Ascending aorta (tissue), 2 donors: ENCODE measurements at regions of chr16 and their contacts with region 1.

Region 1: GRCh38 chr16:85172455-85173145 is 60.3 kb upstream of the CIBAR2 start:
- DNase-seq: no peak
- H3K4me3 ChIP-seq: peak overlapping the region; percentile 13 to 48
- H3K27ac ChIP-seq: peak overlapping the region in 1 of 2 donors; percentile 1
- H3K4me1 ChIP-seq: peaks cover 9 to 42% of the 10 kb centered on the region in 2 donors
- H3K27me3 ChIP-seq: no peaks in the 10 kb centered on the region
- CTCF ChIP-seq: peak; percentile 24 to 40 (median 31)

Region 2: GRCh38 chr16:85206472-85207356 is 34.1 kb after region 1 on chr16:
- intact Hi-C with region 1: loop called (anchors 5 kb)
- DNase-seq: peak in 1 of 2 donors; percentile 82
- H3K4me3 ChIP-seq: peak overlapping the region; percentile 33 to 38
- H3K27ac ChIP-seq: peak overlapping the region; percentile 63 to 77
- H3K4me1 ChIP-seq: peaks cover 35 to 70% of the 10 kb centered on the region in 2 donors
- H3K27me3 ChIP-seq: no peaks in the 10 kb centered on the region
- CTCF ChIP-seq: no peak

Region 3: DNA sequence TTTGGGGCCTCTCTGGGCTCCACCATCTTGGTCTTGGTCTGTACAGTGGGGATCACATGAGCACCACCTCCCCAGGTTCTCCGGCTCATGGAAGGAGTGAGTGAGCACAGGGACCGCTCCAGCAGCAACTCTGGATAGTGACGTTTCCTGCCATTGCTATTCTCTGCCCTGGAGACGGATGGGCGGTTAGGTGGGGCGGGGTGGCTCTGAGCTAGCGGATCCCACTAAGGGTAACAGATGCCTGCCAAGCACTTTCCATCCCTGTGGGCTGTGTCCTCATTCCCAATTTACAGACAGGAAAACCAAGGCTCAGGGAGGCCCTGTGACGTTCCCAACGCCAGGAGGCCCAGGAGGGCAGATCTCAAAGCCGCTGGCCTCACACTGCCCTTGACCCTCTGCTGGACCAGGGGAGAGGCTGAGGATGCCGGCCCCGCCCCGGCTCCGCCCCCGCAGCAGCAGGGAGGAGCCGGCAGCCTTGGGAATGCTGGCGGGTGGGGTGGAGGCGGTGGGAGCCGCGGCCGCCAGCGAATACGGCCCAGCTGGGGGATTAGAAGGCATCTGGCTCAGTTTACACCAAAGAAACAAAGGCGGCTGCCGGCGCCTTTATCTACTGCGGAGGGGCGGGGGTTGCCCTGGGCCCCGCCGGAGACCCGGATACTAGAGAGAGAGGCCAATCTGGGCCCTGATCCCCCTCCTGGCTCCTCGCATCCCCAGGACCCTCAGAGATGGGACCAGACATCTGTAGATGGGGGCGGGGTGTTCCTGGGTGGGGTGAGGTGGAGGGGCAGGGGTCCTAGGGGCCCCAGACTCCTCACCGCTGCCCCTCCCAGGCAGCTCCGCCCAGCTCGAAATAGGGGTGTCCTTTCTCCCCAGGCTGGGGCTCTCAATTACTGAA is 62.0 kb after region 1 on chr16:
- intact Hi-C with region 1: loop called (anchors 5 kb)
- DNase-seq: peak in 1 of 2 donors; percentile 79
- H3K4me3 ChIP-seq: peak overlapping the region; percentile 48 to 58
- H3K27ac ChIP-seq: peak overlapping the region; percentile 70 to 74
- H3K4me1 ChIP-seq: peaks cover 20 to 45% of the 10 kb centered on the region in 2 donors
- H3K27me3 ChIP-seq: no peaks in the 10 kb centered on the region
- CTCF ChIP-seq: no peak

Region 4: DNA sequence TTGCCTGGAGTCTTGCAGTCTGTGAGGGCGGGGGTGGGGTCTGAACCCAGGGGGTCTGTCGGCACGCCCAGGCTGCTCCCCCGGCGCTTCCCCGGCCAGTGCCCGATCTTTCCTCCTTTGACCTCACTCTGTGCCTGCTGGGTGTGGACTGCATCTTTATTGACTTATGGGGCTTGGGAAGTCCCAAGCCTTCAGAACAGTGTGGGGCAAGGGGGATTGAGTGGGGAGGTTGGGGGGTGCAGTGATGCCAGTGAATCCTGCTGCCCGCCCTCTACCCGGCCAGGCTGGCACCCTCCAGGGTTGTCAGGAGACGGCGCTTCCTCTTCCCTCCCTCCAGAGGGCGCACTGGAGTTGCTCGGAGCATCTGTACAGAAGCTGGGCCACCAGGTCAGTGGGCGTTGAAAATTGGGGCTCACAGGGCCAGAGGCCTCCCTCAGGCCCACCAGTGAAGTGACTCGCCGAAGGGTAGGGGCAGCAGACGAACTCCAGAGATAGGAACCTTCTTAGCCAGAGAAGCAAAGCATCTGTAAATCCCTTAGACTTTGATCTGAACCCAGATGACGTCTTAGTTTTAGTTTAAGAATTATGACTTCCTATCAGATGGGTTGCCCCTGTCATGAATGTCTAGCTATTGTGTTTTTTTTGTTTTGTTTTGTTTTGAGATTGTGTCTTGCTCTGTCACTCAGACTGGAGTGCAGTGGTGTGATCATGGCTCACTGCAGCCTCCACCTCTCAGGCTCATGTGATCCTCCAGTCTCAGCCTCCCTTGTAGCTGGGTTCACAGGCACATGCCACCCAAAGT is 124.5 kb after region 1 on chr16:
- intact Hi-C with region 1: no loop called
- DNase-seq: no peak
- H3K4me3 ChIP-seq: no peak overlapping the region
- H3K27ac ChIP-seq: no peak overlapping the region
- H3K4me1 ChIP-seq: no peaks in the 10 kb centered on the region
- H3K27me3 ChIP-seq: no peaks in the 10 kb centered on the region
- CTCF ChIP-seq: peak; percentile 48 to 55 (median 55)

Region 5: DNA sequence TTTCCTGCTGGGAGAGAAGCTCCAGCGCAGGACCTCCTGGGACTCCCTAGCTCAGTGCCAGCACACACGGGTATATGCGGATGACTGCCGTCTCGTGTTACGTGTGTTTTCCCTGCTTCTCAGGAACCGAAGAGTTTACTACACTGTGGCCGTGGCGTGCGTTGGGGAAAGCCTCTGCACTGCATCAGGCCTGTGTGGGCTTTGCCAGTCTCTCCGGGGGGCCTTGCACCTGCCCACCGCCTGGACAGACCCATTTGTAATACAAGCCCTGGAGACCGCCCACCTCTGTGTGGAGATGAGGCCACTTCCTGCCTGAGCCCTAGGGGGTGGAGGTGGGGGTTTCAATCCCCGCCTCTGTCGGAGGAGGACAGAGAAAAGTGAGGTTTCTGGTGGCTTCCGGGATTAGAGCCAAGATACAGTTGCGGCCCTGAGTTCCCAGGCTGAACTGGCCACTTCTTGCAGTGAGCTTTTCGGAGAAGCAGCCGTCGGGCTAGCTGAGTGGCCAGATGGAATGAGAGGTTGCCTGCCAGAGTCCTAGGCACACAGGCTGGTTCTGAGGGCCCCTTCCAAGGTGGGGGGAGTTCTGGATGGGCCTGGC is 397.1 kb after region 1 on chr16:
- intact Hi-C with region 1: no loop called
- DNase-seq: no peak
- H3K4me3 ChIP-seq: no peak overlapping the region
- H3K27ac ChIP-seq: peak overlapping the region in 1 of 2 donors; percentile 27
- H3K4me1 ChIP-seq: peaks cover 9 to 12% of the 10 kb centered on the region in 2 donors
- H3K27me3 ChIP-seq: no peaks in the 10 kb centered on the region
- CTCF ChIP-seq: no peak